ENCODE measurements at regions of chr1 and their contacts with region 1.

Region 1: GRCh38 chr1:160098852-160099561 is 588 bp upstream of the IGSF8 start:
- DNase-seq: peak; percentile 80
- H3K4me3 ChIP-seq: peak overlapping the region in 2 of 3 experiments; percentile 30 to 43
- H3K27ac ChIP-seq: no peak overlapping the region
- H3K4me1 ChIP-seq: peaks cover 37% of the 10 kb centered on the region
- H3K27me3 ChIP-seq: no peaks in the 10 kb centered on the region
- CTCF ChIP-seq: no peak

Region 2: DNA sequence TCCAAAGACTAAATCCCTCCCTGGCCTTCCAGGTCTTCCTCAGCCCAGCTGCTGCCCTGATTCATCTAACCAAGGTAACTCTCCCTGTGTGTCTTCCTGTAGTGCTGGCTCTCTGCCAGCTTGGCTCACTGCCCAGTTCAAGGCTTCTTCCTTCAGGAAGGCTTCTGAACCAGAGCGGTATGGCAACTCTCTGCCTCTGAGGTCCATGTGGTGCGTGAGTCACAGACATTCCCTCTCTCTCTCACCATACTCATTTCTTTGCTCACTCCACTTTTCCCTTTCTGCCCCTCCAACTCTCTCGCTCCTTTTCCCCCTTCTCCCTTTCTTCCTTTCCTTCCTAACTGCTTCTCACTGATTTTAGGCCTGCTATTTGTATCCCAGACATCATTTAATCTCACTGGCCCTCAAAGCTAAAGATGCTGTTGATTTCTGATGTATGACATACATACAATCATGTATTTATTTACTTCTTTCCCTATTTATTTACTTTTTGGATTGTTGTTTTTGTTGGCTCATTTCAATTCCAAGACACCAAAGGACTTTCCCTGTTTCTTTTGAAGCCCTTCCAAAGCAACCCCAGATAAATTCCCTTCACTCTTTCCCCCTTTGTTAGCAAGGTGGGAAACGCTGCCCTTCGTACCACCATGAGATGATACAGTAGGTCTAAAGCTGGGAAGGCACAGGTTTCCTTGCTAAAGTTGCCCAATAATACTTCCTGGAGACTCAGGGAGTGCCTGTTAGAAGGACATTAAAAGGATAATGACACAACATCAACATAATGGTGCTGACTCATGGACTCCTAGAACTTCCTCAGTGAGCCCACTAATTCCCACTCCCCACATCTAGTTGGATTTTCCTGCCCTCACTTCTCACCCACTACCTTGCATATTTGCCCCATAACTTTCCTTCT is 216.8 kb before region 1 on chr1:
- CTCF ChIA-PET with region 1: no interaction called
- dilution Hi-C with region 1: no loop called
- in situ Hi-C with region 1: no loop called
- intact Hi-C with region 1: no loop called
- DNase-seq: peak; percentile 100
- H3K4me3 ChIP-seq: no peak overlapping the region
- H3K27ac ChIP-seq: peak overlapping the region; percentile 75
- H3K4me1 ChIP-seq: peaks cover 44% of the 10 kb centered on the region
- H3K27me3 ChIP-seq: no peaks in the 10 kb centered on the region
- CTCF ChIP-seq: no peak

Region 3: GRCh38 chr1:160124705-160125478 is 25.9 kb after region 1 on chr1:
- CTCF ChIA-PET with region 1: no interaction called
- dilution Hi-C with region 1: no loop called
- in situ Hi-C with region 1: no loop called
- intact Hi-C with region 1: loop called (anchors 1 kb)
- DNase-seq: peak; percentile 84
- H3K4me3 ChIP-seq: no peak overlapping the region
- H3K27ac ChIP-seq: peak overlapping the region; percentile 11
- H3K4me1 ChIP-seq: peaks cover 25% of the 10 kb centered on the region
- H3K27me3 ChIP-seq: no peaks in the 10 kb centered on the region
- CTCF ChIP-seq: peak in 1 of 2 donors; percentile 46

Region 4: GRCh38 chr1:160193091-160193819 is 94.2 kb after region 1 on chr1:
- CTCF ChIA-PET with region 1: interaction called, 6 read pairs
- dilution Hi-C with region 1: no loop called
- in situ Hi-C with region 1: loop called in 1 of 2 experiments (anchors 10 kb)
- intact Hi-C with region 1: loop called (anchors 1 kb)
- DNase-seq: peak; percentile 65
- H3K4me3 ChIP-seq: no peak overlapping the region
- H3K27ac ChIP-seq: no peak overlapping the region
- H3K4me1 ChIP-seq: peaks cover 3% of the 10 kb centered on the region
- H3K27me3 ChIP-seq: peaks cover 2% of the 10 kb centered on the region
- CTCF ChIP-seq: peak; percentile 97

Region 5: DNA sequence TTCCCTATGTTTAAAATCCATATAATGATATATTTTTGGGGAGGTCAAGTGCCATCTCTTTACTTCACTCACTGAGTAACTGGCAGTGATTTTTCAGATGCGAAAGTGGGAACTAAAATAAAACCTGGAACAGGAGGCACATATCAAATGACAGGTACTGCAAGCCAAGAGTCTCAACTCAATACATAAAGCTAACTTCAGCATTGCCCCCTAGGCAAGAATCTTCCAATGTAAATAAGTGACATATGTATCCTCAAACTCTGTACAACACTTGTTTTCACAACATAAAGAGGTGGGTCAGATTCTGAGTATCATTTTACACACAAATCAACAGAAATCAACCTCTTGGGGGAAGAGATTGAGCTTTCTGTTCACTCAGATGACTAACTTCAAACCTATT is 145.2 kb after region 1 on chr1:
- CTCF ChIA-PET with region 1: no interaction called
- dilution Hi-C with region 1: no loop called
- in situ Hi-C with region 1: loop called in 1 of 2 experiments (anchors 10 kb)
- intact Hi-C with region 1: no loop called
- DNase-seq: no peak
- H3K4me3 ChIP-seq: no peak overlapping the region
- H3K27ac ChIP-seq: no peak overlapping the region
- H3K4me1 ChIP-seq: no peaks in the 10 kb centered on the region
- H3K27me3 ChIP-seq: no peaks in the 10 kb centered on the region
- CTCF ChIP-seq: no peak

Region 6: DNA sequence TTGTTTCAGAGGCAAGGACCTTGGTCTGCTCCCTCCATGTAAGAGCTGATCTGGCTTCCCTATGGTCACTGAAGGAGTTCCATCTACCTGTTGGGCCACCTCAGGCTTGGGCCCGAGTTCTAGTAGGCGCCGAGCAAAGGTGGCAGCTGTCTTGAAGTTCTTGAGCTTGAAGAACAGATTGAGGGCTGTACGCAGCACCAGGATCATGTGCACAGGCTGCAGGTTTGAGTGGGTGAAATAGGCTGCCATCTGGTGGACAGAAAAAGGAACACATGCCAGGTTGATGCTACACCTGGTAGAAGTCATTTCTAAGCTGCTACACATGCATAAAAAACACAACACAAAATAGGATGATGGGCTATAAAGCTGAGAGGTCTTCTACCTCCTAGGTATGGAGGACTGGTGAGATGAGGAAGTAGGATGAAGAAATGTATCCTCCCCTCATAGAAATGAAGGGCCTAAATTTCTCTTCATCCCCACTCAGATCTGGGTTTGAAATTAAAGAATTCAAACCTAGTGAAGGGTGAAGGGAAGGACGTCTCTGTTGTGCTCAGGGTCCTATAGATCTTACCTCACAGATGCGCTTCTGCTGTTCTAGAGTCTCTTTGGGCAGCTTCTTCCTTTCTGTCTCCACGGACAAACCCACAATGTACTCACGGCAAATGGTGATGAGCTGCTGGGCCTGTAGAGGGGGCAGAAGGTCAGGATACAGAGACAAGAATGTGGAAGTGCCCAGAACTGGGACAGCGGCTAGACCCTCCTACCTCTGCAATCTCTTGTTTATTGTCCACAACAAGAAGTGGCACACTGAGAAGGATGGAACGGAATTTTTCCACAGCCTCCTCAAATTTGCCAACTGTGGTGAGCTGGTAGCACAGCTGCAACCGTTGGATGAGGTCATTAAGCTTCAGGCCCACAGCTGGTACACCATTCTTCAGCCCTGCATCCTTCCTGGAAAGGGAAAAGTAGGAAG is 192.5 kb after region 1 on chr1:
- CTCF ChIA-PET with region 1: interaction called, 4 read pairs
- dilution Hi-C with region 1: no loop called
- in situ Hi-C with region 1: no loop called
- intact Hi-C with region 1: loop called (anchors 1 kb)
- DNase-seq: peak; percentile 51
- H3K4me3 ChIP-seq: no peak overlapping the region
- H3K27ac ChIP-seq: no peak overlapping the region
- H3K4me1 ChIP-seq: no peaks in the 10 kb centered on the region
- H3K27me3 ChIP-seq: no peaks in the 10 kb centered on the region
- CTCF ChIP-seq: peak; percentile 78 to 84

Region 7: GRCh38 chr1:160400223-160400645 is 301.2 kb after region 1 on chr1 and contains the start of gene VANGL2:
- CTCF ChIA-PET with region 1: no interaction called
- dilution Hi-C with region 1: no loop called
- in situ Hi-C with region 1: loop called in 1 of 2 experiments (anchors 25 kb)
- intact Hi-C with region 1: no loop called
- DNase-seq: peak; percentile 38
- H3K4me3 ChIP-seq: peak within 1 kb of the TSS; percentile 51 to 68 (median 54)
- H3K27ac ChIP-seq: no peak within 1 kb of the TSS
- H3K4me1 ChIP-seq: peaks cover 24% of the 10 kb centered on the region
- H3K27me3 ChIP-seq: no peaks in the 10 kb centered on the region
- CTCF ChIP-seq: no peak
- total RNA-seq, gene VANGL2: 8.7 to 10.3 TPM

Region 8: GRCh38 chr1:160607011-160607671 is 508.1 kb after region 1 on chr1:
- CTCF ChIA-PET with region 1: no interaction called
- dilution Hi-C with region 1: no loop called
- in situ Hi-C with region 1: no loop called
- intact Hi-C with region 1: loop called (anchors 5 kb)
- DNase-seq: peak; percentile 70
- H3K4me3 ChIP-seq: no peak overlapping the region
- H3K27ac ChIP-seq: no peak overlapping the region
- H3K4me1 ChIP-seq: no peaks in the 10 kb centered on the region
- H3K27me3 ChIP-seq: peaks cover 2% of the 10 kb centered on the region
- CTCF ChIP-seq: peak; percentile 78 to 79